ENCODE measurements at regions of chr3 and their contacts with region 1.

Region 1: GRCh38 chr3:128075516-128076482 is 23.6 kb downstream of the SEC61A1 start:
- DNase-seq: peak; percentile 96
- ATAC-seq: peak; percentile 95

Region 2: DNA sequence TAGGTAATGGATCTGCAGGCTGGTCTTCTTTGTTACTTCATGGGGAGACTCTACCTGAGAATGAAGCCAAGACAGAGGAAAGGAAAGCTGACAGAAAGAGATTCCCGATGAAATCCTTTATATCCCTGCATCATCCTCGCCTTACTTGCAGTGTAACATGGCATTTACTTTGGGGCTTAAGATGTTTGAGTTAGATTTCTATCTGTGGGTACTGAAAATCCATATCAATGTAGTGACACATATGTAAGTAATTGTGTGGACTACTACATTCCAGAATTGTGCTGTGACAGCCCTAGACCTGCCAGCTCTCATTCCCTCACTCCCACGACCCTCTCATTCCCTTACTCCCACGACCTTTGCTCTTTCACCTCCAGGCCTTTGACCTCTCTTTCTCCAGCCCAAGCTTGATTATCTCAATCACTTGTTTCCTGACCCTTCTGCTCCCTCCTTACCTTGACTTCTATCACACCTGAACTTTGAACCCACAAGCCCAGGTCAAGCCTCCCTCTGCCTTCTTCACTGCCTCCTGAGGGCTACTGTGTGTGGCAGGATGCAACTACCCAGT is 51.4 kb after region 1 on chr3:
- intact Hi-C with region 1: loop called (anchors 2 kb)
- DNase-seq: no peak
- ATAC-seq: no peak

Region 3: DNA sequence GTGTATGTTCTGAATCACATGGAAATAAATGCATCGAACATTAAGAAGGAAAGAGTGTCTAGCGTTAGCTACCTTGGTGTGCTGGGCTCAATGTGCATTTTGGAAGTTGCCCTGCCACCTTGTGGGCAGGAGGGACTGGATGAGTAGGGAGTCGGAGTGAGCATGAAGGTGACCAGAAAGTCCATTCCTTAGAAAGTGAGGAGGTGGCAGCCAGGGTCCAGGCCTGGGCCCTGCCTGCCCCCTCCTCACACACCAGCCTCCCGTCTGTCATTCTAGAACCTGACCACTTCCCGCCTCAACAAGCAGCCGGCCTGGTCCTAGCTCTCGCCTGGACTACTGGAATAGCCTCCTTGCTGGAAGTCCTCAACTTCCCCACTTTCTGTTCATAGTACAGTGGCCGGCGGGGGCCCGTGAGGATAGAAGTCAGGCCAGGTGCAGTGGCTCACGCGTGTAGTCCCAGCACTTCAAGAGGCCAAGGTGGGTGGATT is 427.4 kb after region 1 on chr3:
- intact Hi-C with region 1: loop called (anchors 10 kb)
- DNase-seq: no peak
- ATAC-seq: no peak